HepG2 (cell line): ENCODE measurements at regions of chr10 and their contacts with region 1.

Region 1: DNA sequence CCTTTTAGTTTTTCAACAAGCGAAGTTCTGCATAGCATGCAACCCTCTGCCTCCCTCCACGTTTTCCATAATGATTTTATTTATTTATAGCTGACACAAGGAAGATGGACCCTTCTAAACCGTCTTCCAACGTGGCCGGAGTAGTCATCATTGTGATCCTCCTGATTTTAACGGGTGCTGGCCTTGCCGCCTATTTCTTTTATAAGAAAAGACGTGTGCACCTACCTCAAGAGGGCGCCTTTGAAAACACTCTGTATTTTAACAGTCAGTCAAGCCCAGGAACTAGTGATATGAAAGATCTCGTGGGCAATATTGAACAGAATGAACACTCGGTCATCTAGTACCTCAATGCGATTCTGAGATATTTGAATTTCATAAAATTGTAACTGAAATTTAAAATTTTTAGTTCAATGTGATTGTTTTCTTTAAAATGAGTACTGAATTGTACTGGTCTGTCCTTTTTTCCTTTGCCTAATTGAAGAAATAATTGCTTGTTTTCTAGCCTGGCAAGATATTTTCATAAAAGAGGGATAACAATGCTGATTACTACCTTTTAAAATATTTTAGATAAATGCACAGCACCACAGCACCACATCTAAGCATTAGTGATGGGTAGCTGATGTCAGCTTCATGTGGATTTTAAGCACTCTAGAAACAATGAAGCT is 41.5 kb upstream of the SLC39A12 start:
- DNase-seq: peak; percentile 47
- ATAC-seq: peak; percentile 66
- H3K4me3 ChIP-seq: no peak overlapping the region
- H3K27ac ChIP-seq: no peak overlapping the region
- H3K4me1 ChIP-seq: no peaks in the 10 kb centered on the region
- H3K27me3 ChIP-seq: peaks cover 0 to 7% of the 10 kb centered on the region in 2 experiments; a peak in 1 of 5 replicates
- CTCF ChIP-seq: peak; percentile 54
- EP300 ChIP-seq: no peak
- POLR2A ChIP-seq: no peak
- RAD21 ChIP-seq: no peak

Region 2: GRCh38 chr10:17989908-17990767 is 79.9 kb after region 1 on chr10:
- CTCF ChIA-PET with region 1: no interaction called
- POLR2A ChIA-PET with region 1: no interaction called
- in situ Hi-C with region 1: no loop called
- intact Hi-C with region 1: no loop called
- DNase-seq: no peak
- ATAC-seq: no peak
- H3K4me3 ChIP-seq: no peak overlapping the region
- H3K27ac ChIP-seq: no peak overlapping the region
- H3K4me1 ChIP-seq: no peaks in the 10 kb centered on the region
- H3K27me3 ChIP-seq: peaks cover 0 to 7% of the 10 kb centered on the region in 2 experiments; a peak in 1 of 5 replicates
- CTCF ChIP-seq: no peak
- EP300 ChIP-seq: no peak
- POLR2A ChIP-seq: no peak
- RAD21 ChIP-seq: no peak

Region 3: DNA sequence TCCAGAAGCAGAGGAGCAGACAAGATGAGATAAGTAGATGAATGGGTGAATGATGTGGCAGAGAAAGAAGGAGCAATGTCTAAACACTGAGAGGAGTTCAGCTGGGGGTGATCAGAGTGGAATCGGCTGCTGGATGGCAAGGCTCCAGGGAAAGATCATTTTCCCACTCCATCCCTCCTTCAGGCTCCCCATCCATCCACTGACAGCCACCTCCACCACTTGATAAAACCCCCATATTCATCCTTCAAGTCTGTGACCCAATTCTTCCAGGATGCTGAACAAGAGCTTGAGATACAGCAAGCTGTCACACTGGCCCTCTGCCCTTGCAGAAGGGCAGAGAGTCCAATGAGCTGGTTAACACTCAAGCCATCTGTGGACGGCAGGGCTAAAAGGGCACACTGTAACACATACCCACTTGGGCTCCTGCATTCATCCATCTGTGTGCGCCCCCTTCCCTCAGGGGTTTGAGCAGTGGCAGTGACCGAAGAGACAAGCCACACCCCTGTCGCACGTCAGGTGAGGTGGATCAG is 199.1 kb after region 1 on chr10:
- CTCF ChIA-PET with region 1: no interaction called
- POLR2A ChIA-PET with region 1: no interaction called
- in situ Hi-C with region 1: no loop called
- intact Hi-C with region 1: loop called (anchors 2 kb)
- DNase-seq: no peak
- ATAC-seq: no peak
- H3K4me3 ChIP-seq: no peak overlapping the region
- H3K27ac ChIP-seq: no peak overlapping the region
- H3K4me1 ChIP-seq: no peaks in the 10 kb centered on the region
- H3K27me3 ChIP-seq: no peaks in the 10 kb centered on the region; a peak in 1 of 5 replicates
- CTCF ChIP-seq: no peak
- EP300 ChIP-seq: no peak
- POLR2A ChIP-seq: no peak
- RAD21 ChIP-seq: no peak

Region 4: GRCh38 chr10:18214691-18215563 is 304.7 kb after region 1 on chr10:
- CTCF ChIA-PET with region 1: interaction called, 3 read pairs
- POLR2A ChIA-PET with region 1: no interaction called
- in situ Hi-C with region 1: loop called (anchors 10 kb)
- intact Hi-C with region 1: loop called (anchors 1 kb)
- DNase-seq: peak; percentile 16
- ATAC-seq: peak; percentile 81
- H3K4me3 ChIP-seq: no peak overlapping the region
- H3K27ac ChIP-seq: no peak overlapping the region
- H3K4me1 ChIP-seq: no peaks in the 10 kb centered on the region
- H3K27me3 ChIP-seq: no peaks in the 10 kb centered on the region
- CTCF ChIP-seq: peak; percentile 76
- EP300 ChIP-seq: no peak
- POLR2A ChIP-seq: no peak
- RAD21 ChIP-seq: no peak